Dorsolateral prefrontal cortex (tissue), 120 donors: ENCODE measurements at regions of chr9 and their contacts with region 1.

Region 1: DNA sequence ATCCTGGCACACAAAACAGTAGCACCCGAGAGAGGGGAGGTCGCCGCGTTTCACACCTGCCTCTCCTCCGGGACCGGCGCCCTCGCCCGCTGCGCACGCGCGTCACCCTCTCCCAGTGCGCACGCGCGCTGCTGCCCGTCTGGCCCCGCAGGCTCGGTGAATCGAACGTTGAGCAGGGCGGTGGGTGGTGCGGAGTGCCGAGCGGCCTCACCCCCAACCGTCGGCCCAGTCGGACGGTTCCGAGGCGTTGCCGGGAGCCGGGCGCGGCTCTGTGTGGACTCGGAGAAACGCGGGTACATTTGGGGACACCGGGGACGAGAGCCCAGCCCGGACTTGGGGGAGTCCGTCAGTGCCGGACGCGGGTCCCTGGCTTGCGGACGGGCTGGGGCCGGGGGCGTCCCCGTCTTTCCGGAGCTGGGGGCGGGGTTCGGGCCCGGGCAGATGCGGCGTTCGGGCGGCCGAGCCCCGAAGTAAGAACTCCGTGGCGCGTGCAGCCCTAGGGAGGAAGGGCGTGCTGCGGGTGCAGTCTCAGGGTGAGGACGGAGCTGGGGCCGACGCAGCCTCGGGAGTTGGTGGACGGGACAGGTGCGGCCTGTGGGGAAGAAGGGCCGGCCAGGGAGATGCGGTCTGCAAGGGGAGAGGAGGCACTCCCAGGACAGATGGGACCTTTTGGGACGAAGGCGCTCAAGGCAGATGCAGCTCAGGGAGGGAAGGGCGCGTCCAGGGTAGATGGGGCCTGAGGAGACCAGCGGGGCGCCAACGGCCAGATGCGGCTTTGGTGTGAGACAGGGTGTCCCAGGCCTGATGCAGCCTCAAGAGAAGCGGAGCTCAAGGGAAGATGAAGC is at the start of gene POMT1:
- DNase-seq: peak; percentile 74 to 95 (median 84)
- H3K4me3 ChIP-seq: peak within 1 kb of the TSS; percentile 53 to 99 (median 94)
- H3K27ac ChIP-seq: peak within 1 kb of the TSS in 56 of 59 donors; percentile 8 to 92 (median 74)
- H3K27me3 ChIP-seq: no peaks in the 10 kb centered on the region
- CTCF ChIP-seq: peak in 38 of 56 donors; percentile 9 to 65 (median 30)
- total RNA-seq, gene POMT1: 34.7 to 106 (median 58.6) TPM

Region 2: GRCh38 chr9:131393622-131394463 is 109.2 kb before region 1 on chr9 and contains the start of gene PRRC2B:
- intact Hi-C with region 1: loop called (anchors 10 kb)
- DNase-seq: peak in 8 of 10 donors; percentile 55 to 86 (median 76)
- H3K4me3 ChIP-seq: peak within 1 kb of the TSS; percentile 45 to 81 (median 68)
- H3K27ac ChIP-seq: peak within 1 kb of the TSS; percentile 65 to 98 (median 93)
- H3K27me3 ChIP-seq: no peaks in the 10 kb centered on the region
- CTCF ChIP-seq: peak in 45 of 56 donors; percentile 6 to 81 (median 50)
- total RNA-seq, gene PRRC2B: 234 to 434 (median 347) TPM